ENCODE measurements at regions of chr6 and their contacts with region 1.

Region 1: DNA sequence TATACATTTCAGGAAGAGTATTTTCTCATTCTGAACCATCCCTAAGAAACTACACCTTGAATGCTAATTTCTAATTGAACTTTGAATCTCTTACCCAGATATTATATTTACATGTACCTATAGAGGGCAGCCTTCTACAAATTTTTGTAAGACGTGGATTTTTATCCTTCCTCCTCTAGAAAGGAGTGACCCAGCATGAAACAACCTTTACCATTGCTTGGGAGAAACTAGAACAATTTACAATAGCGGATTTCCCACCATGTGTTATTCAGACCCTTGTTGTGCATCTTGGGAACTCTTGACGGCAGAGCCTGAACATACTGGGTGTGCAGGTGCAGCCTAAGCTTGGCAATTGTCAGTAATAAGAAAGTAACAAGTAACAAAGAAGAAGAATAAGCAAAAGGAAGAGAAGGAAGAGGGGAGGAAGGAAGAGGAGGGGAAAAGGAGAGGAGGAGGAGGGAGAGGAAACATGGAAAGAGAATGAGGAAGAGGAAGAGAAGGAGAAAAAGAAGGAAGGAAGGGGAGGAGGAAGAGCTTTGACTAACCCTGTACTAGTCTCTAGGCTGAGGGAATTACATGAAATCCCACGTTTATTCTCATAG is 10.8 kb upstream of the TAAR1 start:
- DNase-seq: no peak
- H3K4me3 Mint-ChIP-seq: no peak overlapping the region
- H3K27ac Mint-ChIP-seq: no peak overlapping the region
- H3K4me1 Mint-ChIP-seq: peaks cover 6% of the 10 kb centered on the region
- H3K27me3 Mint-ChIP-seq: peaks cover 22% of the 10 kb centered on the region

Region 2: DNA sequence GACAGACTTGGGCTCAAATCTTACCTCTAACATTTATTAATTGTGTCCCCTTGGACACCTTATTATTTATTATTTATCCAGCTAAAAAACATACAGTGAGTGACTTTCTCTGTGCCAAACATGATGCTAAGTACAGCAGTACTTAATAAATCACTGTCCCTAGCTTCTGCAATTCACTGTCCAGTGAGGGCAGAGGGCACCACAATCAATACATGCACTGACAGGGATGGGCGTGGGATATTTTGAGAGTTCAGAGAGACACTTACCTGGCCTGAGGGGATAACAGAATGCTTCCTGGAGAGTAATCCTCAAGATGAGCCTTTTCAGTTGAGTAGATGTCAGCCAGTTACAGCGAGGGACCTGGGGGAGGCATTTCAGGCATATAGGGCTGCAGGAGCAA is 36.4 kb before region 1 on chr6:
- intact Hi-C with region 1: no loop called
- DNase-seq: no peak
- H3K4me3 Mint-ChIP-seq: no peak overlapping the region
- H3K27ac Mint-ChIP-seq: no peak overlapping the region
- H3K4me1 Mint-ChIP-seq: no peaks in the 10 kb centered on the region
- H3K27me3 Mint-ChIP-seq: peaks cover 30% of the 10 kb centered on the region

Region 3: GRCh38 chr6:132768051-132768517 is 98.3 kb after region 1 on chr6:
- intact Hi-C with region 1: loop called (anchors 1 kb)
- DNase-seq: peak; percentile 21
- H3K4me3 Mint-ChIP-seq: no peak overlapping the region
- H3K27ac Mint-ChIP-seq: no peak overlapping the region
- H3K4me1 Mint-ChIP-seq: peaks cover 17% of the 10 kb centered on the region
- H3K27me3 Mint-ChIP-seq: peaks cover 2% of the 10 kb centered on the region

Region 4: GRCh38 chr6:132798869-132799538 is 129.2 kb after region 1 on chr6:
- intact Hi-C with region 1: loop called (anchors 1 kb)
- DNase-seq: peak; percentile 53
- H3K4me3 Mint-ChIP-seq: peak overlapping the region; percentile 90
- H3K27ac Mint-ChIP-seq: no peak overlapping the region
- H3K4me1 Mint-ChIP-seq: peaks cover 6% of the 10 kb centered on the region
- H3K27me3 Mint-ChIP-seq: peaks cover 8% of the 10 kb centered on the region

Measured in activated T-helper 2 cell treated with anti-CD3 and anti-CD28 coated beads, Interferon-gamma antibody, Interleukin-2, Interleukin-4, amounts not matched to agents 10 μg/mL and 5 μg/mL and 100 μg/mL, durations not matched to agents 14 hours and 24 hours and 36 hours (primary cell).